ENCODE measurements at regions of chr17 and their contacts with region 1.

Region 1: DNA sequence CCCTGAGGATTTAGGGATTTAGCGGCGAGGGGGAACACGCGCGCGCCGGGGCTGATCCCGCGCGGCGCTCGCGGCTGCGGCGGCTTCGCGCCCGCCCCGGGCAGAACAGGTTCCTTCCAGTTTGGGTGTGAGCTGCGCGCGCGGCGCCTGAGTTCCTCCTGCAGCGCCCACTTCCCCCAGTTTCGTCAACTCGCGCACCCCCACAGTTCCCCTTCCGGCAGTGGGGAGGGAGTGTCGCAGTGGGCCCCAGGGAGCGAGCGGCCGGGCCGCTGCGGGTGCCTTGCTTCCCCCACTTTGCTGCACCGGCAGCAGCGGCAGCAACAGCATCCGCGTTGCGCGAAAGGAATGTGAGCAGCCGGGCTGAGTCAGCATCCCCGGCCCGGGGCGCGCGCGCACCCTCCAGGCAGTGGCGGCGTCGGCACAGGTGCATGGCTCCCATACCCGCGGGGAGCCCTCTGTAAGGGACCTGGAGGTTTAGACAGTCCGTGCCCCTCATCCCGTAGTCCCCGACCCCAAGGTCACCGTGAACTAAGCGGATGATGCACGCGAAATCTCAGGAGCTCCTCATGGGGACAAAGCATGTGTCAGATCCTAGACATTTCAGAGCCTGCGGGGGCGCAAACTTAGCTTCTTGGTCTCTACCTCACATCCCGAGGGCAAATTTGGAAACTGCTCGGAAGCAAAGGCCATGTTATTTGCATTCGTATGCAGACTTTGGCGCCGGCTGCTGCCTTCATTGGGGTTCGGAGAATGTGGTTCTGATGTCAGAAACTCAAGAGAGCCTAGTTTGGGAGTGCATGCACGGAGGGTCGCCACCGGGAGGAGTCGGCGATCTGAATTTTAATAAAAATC is 775 bp downstream of the ARSG start:
- DNase-seq: peak; percentile 65 to 81 (median 76)
- H3K4me3 ChIP-seq: peak overlapping the region in 3 of 4 donors; percentile 15 to 83 (median 59)
- H3K27ac ChIP-seq: peak overlapping the region in 4 of 5 donors; percentile 0 to 91 (median 78)
- H3K4me1 ChIP-seq: peaks cover 13 to 24% of the 10 kb centered on the region in 2 donors
- H3K27me3 ChIP-seq: no peaks in the 10 kb centered on the region
- CTCF ChIP-seq: peak in 1 of 6 experiments; percentile 19
- POLR2A ChIP-seq: peak in 1 of 2 donors; percentile 80

Region 2: GRCh38 chr17:68381076-68381900 is 89.2 kb after region 1 on chr17:
- intact Hi-C with region 1: loop called in 1 of 2 experiments (anchors 10 kb)
- DNase-seq: peak in 6 of 7 donors; percentile 47 to 79 (median 56)
- H3K4me3 ChIP-seq: no peak overlapping the region
- H3K27ac ChIP-seq: peak overlapping the region in 2 of 5 donors; percentile 8 to 44
- H3K4me1 ChIP-seq: peaks cover 21 to 37% of the 10 kb centered on the region in 2 donors
- H3K27me3 ChIP-seq: no peaks in the 10 kb centered on the region
- CTCF ChIP-seq: no peak
- POLR2A ChIP-seq: no peak